ENCODE measurements at regions of chr22 and their contacts with region 1.

Region 1: GRCh38 chr22:41381329-41382097 is at the start of gene TEF:
- DNase-seq: peak; percentile 94
- ATAC-seq: peak; percentile 85
- H3K4me3 ChIP-seq: peak within 1 kb of the TSS; percentile 79
- H3K27ac ChIP-seq: peak within 1 kb of the TSS; percentile 85
- H3K4me1 ChIP-seq: peaks cover 8% of the 10 kb centered on the region; the same call in 1 of the 2 replicates
- H3K27me3 ChIP-seq: no peaks in the 10 kb centered on the region
- CTCF ChIP-seq: no peak
- total RNA-seq, gene TEF: 4.0 TPM in 2 replicates

Region 2: DNA sequence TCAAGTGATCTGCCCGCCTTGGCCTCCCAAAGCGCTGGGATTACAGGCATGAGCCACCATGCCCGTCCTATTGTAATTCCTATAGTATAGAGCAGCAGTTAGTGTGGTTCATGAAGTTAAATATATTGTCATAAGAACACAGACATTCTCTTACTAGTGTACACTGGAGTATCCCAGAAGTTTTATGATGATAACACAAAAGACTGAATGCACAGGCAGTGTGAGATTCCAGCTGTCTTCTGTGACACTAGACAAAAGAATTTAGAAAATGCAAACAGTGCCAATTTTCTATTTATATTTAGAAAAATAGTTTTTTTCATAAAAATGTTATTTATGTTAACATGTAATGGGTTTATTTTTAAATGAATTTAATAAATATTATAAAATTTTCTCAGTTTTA is 469.7 kb before region 1 on chr22:
- CTCF ChIA-PET with region 1: no interaction called
- POLR2A ChIA-PET with region 1: interaction called, 32 read pairs
- intact Hi-C with region 1: no loop called
- DNase-seq: no peak
- ATAC-seq: no peak
- H3K4me3 ChIP-seq: no peak overlapping the region
- H3K27ac ChIP-seq: no peak overlapping the region
- H3K4me1 ChIP-seq: no peaks in the 10 kb centered on the region
- H3K27me3 ChIP-seq: no peaks in the 10 kb centered on the region
- CTCF ChIP-seq: no peak

Region 3: GRCh38 chr22:41197038-41197972 is 184.2 kb before region 1 on chr22:
- CTCF ChIA-PET with region 1: no interaction called
- POLR2A ChIA-PET with region 1: interaction called, 15 read pairs
- intact Hi-C with region 1: no loop called
- DNase-seq: peak; percentile 59
- ATAC-seq: peak; percentile 72
- H3K4me3 ChIP-seq: peak overlapping the region; percentile 78
- H3K27ac ChIP-seq: no peak overlapping the region
- H3K4me1 ChIP-seq: peaks cover 3% of the 10 kb centered on the region; the same call in 1 of the 2 replicates
- H3K27me3 ChIP-seq: no peaks in the 10 kb centered on the region
- CTCF ChIP-seq: no peak

Region 4: GRCh38 chr22:41285820-41286638 is 95.5 kb before region 1 on chr22 and contains the start of gene RANGAP1:
- CTCF ChIA-PET with region 1: no interaction called
- POLR2A ChIA-PET with region 1: no interaction called
- intact Hi-C with region 1: loop called (anchors 5 kb)
- DNase-seq: peak; percentile 96
- ATAC-seq: peak; percentile 92
- H3K4me3 ChIP-seq: peak within 1 kb of the TSS; percentile 96
- H3K27ac ChIP-seq: peak within 1 kb of the TSS; percentile 90
- H3K4me1 ChIP-seq: peaks cover 45% of the 10 kb centered on the region
- H3K27me3 ChIP-seq: no peaks in the 10 kb centered on the region
- CTCF ChIP-seq: no peak
- total RNA-seq, gene RANGAP1: 99.0 and 128 TPM in 2 replicates

Region 5: DNA sequence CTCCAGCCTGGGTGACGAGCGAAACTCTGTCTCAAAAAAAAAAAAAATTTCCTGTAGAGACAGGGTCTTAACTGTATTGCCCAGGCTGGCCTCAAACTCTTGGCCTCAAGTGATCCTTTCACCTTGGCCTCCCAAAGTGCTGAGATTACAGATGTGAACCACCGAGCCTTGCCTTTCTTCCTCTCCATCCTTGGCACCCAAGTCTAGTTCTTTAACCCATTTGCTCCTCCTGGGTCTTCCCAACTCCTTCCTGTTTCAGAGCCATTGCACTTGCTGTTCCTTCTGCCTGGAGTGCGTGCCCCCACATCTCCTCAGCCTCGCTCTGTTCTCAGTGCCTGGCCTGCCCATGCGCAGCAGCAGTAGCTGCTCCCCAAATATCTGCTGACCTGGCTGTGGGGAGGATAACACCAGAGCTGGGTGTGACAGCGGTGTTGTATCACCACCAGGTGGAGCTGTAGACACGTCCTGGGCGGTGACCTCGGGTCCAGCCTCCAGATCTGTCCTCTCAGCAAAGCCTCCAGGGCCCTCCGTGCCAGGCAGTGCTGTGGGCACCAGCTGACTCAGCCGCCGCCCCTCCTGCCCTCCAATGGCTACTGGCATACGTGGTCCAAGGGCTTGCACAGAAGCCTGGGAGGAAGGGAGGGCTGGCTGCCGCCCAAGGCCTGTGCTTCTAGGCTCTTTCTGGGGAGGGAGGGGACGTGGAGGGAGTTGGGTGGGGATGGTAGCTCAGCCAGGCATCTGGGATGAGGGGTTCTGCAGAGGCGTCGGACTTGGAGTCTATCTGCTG is 22.2 kb after region 1 on chr22:
- CTCF ChIA-PET with region 1: interaction called, 4 read pairs
- POLR2A ChIA-PET with region 1: interaction called, 16 read pairs
- intact Hi-C with region 1: no loop called
- DNase-seq: peak; percentile 88
- ATAC-seq: peak; percentile 94
- H3K4me3 ChIP-seq: no peak overlapping the region
- H3K27ac ChIP-seq: no peak overlapping the region
- H3K4me1 ChIP-seq: peaks cover 15% of the 10 kb centered on the region
- H3K27me3 ChIP-seq: no peaks in the 10 kb centered on the region
- CTCF ChIP-seq: peak; percentile 86

Measured in PC-3 (cell line).